ENCODE measurements at regions of chr11 and their contacts with region 1.

Region 1: DNA sequence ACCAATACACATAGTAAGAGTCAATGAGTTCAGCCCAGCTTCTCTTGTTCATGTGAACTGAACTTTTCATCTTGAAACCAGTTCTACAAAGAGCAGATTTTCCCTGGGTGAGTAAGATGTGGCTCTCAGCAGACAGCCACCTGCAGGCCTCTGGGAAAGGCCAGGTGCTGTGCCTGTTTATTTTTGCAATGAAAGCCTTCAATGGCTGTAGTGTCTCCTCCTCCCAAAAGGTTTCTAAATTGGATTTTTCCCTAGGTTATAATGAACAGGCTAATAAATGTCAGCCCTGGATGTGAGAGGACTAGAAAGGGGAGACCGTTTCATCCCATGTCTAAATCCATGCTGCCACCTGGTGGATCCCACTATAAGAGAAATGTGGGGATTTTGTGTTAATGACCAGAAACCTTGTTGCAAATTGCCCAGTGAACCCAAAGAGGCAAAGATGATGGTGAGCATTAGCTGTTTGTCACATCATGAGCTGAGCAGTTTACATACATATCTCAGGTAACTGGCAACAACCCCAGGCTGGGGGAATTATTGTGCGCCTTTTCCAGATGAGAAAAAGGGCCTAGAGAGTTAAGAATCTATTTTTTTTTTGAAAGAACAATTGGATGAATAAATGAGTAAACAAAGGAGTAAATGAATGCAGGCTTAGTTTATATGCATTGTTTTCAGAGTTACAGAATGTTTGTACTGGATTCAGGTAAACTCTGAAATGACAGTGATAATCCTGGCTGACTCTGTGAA is 12.7 kb downstream of the C11orf91 start:
- DNase-seq: no peak
- ATAC-seq: peak; percentile 22 to 67 (median 40)
- H3K4me3 ChIP-seq: no peak overlapping the region
- H3K27ac ChIP-seq: no peak overlapping the region
- H3K4me1 ChIP-seq: peaks cover 0 to 18% (median 5%) of the 10 kb centered on the region in 4 donors
- H3K27me3 ChIP-seq: no peaks in the 10 kb centered on the region
- CTCF ChIP-seq: peak; percentile 60 to 74 (median 66)
- POLR2A ChIP-seq: no peak

Region 2: DNA sequence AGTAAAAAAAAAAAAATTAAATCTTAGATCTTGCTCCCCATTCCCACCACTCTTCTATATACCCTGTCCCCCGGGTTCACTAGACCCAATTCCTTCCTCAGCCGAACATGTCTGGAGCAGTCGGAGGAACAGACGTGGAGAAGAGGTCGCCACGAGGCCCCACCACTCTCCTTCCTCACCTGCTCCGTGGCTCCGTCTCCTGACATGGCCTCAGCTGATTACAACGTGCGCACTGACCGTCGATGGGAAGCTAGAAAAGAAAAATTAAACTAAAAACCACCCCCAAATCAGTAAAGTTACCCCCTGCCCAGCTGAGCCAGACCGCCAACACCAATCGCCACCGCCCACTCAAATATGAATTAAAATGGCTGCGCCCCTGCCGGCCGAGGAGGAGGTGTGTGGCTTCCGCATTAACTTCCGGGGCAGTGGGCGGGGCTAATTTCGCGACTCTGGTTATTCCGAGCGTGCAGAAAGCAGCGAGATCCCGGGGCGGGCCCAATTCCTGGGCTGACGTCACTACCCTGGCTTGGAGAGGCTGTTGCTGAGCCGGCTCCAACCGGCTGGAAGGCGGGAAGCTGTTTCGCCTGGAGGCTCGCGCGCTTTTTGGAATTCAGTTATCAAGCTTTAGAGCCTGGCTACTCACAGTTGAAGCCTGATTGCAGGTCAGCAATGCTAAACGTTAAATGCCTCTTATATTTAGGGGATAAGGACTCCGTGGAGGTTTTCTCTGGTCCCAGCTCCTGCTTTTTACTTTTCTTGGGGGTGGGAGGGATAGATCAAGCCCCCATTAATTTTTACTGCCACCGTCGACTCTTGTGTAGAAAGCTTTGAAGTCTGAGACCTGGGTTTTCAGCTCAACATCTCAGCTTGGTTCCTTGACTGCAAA is 526.5 kb before region 1 on chr11 and contains the start of gene CSTF3:
- intact Hi-C with region 1: loop called in 1 of 2 experiments (anchors 10 kb)
- DNase-seq: peak; percentile 100
- ATAC-seq: peak; percentile 97 to 99 (median 99)
- H3K4me3 ChIP-seq: peak within 1 kb of the TSS; percentile 65 to 82 (median 77)
- H3K27ac ChIP-seq: peak within 1 kb of the TSS; percentile 77 to 79 (median 79)
- H3K4me1 ChIP-seq: peaks cover 0 to 11% (median 0%) of the 10 kb centered on the region in 4 donors
- H3K27me3 ChIP-seq: no peaks in the 10 kb centered on the region
- CTCF ChIP-seq: peak; percentile 32 to 46 (median 44)
- POLR2A ChIP-seq: peak; percentile 72
- total RNA-seq, gene CSTF3: 11.5 to 14.0 (median 12.0) TPM

Region 3: GRCh38 chr11:33362051-33362910 is 325.6 kb before region 1 on chr11:
- intact Hi-C with region 1: loop called (anchors 10 kb)
- DNase-seq: no peak
- ATAC-seq: peak; percentile 61 to 83 (median 74)
- H3K4me3 ChIP-seq: no peak overlapping the region
- H3K27ac ChIP-seq: no peak overlapping the region
- H3K4me1 ChIP-seq: peaks cover 0 to 5% (median 0%) of the 10 kb centered on the region in 4 donors
- H3K27me3 ChIP-seq: no peaks in the 10 kb centered on the region
- CTCF ChIP-seq: peak; percentile 68 to 73 (median 70)
- POLR2A ChIP-seq: no peak

Region 4: GRCh38 chr11:33437529-33437928 is 250.4 kb before region 1 on chr11:
- intact Hi-C with region 1: no loop called
- DNase-seq: no peak
- ATAC-seq: no peak
- H3K4me3 ChIP-seq: no peak overlapping the region
- H3K27ac ChIP-seq: no peak overlapping the region
- H3K4me1 ChIP-seq: no peaks in the 10 kb centered on the region
- H3K27me3 ChIP-seq: no peaks in the 10 kb centered on the region
- CTCF ChIP-seq: no peak
- POLR2A ChIP-seq: no peak

Region 5: GRCh38 chr11:33542921-33543320 is 145.0 kb before region 1 on chr11:
- intact Hi-C with region 1: loop called in 1 of 2 experiments (anchors 10 kb)
- DNase-seq: peak in 2 of 3 donors; percentile 40 to 57
- ATAC-seq: peak; percentile 81 to 88 (median 82)
- H3K4me3 ChIP-seq: no peak overlapping the region
- H3K27ac ChIP-seq: no peak overlapping the region
- H3K4me1 ChIP-seq: no peaks in the 10 kb centered on the region
- H3K27me3 ChIP-seq: no peaks in the 10 kb centered on the region
- CTCF ChIP-seq: peak; percentile 50 to 67 (median 57)
- POLR2A ChIP-seq: no peak

Region 6: GRCh38 chr11:33742249-33742851 is 54.4 kb after region 1 on chr11:
- intact Hi-C with region 1: no loop called
- DNase-seq: no peak
- ATAC-seq: peak; percentile 55 to 70 (median 58)
- H3K4me3 ChIP-seq: no peak overlapping the region
- H3K27ac ChIP-seq: no peak overlapping the region
- H3K4me1 ChIP-seq: peaks cover 0 to 11% (median 5%) of the 10 kb centered on the region in 4 donors
- H3K27me3 ChIP-seq: no peaks in the 10 kb centered on the region
- CTCF ChIP-seq: peak; percentile 35 to 56 (median 53)
- POLR2A ChIP-seq: no peak